ENCODE measurements at regions of chr10 and their contacts with region 1.

Region 1: GRCh38 chr10:117537436-117537903 is 5.1 kb upstream of the EMX2 start:
- DNase-seq: peak; percentile 54
- CTCF ChIP-seq: peak; percentile 57

Region 2: GRCh38 chr10:117547716-117548668 is 10.5 kb after region 1 on chr10:
- CTCF ChIA-PET with region 1: interaction called, 13 read pairs
- POLR2A ChIA-PET with region 1: no interaction called
- DNase-seq: no peak
- CTCF ChIP-seq: no peak

Region 3: DNA sequence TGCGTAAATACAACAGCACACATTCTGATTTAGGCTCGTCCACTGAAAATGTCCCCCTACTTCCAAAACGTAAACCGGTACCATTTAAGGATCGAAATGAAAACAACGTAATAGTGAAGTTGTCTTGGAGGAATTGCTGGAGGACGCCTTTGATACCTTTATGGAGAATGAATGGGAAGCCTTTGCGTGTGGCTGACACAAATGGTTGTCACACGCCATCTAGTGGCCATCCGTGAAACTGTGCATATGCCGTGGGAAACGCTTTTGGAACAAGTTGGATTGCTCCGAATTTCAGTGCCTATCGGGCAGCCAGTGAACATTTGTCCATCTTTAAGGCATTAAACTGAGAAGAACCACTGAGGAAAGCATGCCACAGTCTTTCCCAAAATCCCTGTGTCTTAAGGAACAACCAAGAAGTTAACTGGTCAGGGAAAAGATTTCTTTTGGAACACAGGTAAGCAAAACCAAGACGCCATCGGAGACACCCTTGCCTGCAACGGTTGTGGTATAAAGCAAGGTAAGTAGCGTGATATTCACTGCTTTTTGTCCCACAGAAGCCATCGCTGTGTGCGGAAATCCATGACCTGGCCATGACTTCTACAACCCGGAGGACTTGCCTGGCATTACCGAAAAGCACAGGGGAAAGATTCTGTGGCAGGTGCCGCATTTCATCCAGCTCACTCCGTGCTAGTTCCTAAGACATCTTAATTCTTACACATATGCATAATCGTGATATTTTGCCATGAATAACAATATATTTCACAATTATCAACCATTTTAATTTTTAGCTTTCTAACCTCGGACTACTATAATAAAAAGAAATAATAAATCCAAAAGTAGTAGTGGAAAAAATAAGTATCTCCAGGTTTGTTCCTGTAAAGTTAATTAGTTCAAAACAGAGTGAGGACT is 704.0 kb after region 1 on chr10:
- CTCF ChIA-PET with region 1: interaction called, 20 read pairs
- POLR2A ChIA-PET with region 1: no interaction called
- DNase-seq: peak; percentile 50
- CTCF ChIP-seq: peak; percentile 94